A673 (cell line): ENCODE measurements at regions of chr15 and their contacts with region 1.

Region 1: DNA sequence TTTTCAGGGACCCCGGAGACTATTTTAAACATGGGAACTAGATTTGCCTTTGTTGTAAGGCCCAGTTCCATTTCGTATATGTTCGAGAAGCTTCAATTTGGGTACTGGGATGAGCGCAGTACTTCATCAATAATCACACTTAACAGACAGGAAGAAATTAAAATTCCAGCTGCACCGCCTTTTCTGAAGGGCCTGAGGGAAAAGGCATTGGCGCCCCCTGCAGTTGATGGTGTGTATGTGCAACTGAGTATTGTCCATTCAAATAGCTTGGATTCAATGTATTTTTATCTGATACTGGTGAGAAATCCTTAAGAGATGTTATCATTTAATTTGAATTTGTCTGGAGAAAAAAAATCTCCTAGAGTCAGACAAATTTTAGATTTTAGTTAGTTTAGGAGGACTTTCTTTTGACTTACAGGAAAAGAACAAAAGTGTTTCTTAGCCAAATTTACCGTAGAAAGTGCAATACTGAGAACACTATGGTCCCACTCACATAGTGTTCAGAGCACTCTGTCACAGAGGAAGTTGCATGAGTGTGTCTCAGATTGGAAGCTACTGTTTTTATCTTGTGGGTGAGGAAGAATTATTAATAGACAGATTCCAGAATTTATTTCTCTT is 5.4 kb upstream of the ALDH1A2 start:
- DNase-seq: peak; percentile 82
- H3K4me3 ChIP-seq: no peak overlapping the region
- H3K27ac ChIP-seq: no peak overlapping the region
- H3K4me1 ChIP-seq: peaks cover 3% of the 10 kb centered on the region
- H3K27me3 ChIP-seq: peaks cover 33% of the 10 kb centered on the region
- CTCF ChIP-seq: peak; percentile 97

Region 2: DNA sequence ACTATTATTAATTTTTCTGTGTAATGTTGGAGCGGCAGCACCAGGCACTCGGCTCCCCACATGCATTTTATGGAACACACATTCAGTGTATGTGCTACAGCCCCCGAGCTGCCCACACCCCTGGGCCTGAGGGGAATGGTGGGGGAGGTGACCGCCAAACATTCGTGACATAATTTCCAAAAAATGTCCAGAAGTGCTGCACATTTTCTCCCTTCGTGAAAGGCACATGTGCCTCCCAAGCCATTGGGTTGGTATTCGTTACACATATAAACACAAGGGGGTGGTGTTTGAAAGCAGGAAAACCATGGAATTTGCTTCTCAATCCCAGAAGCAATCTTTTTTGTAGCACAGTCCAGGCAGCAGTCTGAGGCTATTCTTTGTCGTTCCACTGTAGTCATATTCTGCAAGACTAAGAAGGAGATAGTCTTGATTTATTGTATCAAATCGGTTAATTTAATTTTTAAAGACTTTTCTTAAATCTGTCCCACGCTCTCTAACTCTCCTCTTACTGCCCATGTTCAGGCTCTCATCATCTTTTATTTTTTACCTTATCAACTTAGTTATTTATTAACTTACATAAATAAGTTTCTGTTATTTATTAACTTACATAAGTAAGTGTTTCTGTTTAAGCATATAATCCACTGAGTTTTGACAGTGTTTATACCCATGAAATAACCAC is 403.6 kb before region 1 on chr15:
- CTCF ChIA-PET with region 1: interaction called, 3 read pairs
- POLR2A ChIA-PET with region 1: no interaction called
- intact Hi-C with region 1: loop called (anchors 10 kb)
- DNase-seq: peak; percentile 53
- H3K4me3 ChIP-seq: no peak overlapping the region
- H3K27ac ChIP-seq: no peak overlapping the region
- H3K4me1 ChIP-seq: no peaks in the 10 kb centered on the region
- H3K27me3 ChIP-seq: peaks cover 8% of the 10 kb centered on the region
- CTCF ChIP-seq: peak; percentile 57

Region 3: DNA sequence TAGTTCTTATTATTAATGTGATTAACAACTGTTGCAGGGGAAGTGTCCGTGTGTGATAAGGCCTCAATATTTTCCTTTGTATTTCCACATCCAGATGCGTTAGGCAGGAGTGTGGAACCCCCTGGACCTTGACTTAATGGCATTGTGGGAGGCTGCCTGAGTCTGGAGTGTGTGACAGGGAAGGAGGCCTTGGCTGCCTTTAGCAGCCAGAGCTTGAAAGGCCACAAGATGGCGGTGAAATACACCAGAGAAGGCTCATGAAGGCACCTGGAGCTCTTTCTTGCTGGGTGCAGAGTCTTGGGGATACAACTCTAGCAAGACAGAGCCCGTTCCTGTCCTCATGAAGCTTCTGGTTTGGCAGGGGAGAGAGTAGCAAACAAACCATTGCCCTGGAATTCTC is 327.5 kb before region 1 on chr15:
- CTCF ChIA-PET with region 1: interaction called, 11 read pairs
- POLR2A ChIA-PET with region 1: no interaction called
- intact Hi-C with region 1: loop called (anchors 10 kb)
- DNase-seq: peak; percentile 26
- H3K4me3 ChIP-seq: no peak overlapping the region
- H3K27ac ChIP-seq: no peak overlapping the region
- H3K4me1 ChIP-seq: no peaks in the 10 kb centered on the region
- H3K27me3 ChIP-seq: no peaks in the 10 kb centered on the region
- CTCF ChIP-seq: peak; percentile 44

Region 4: GRCh38 chr15:57866149-57866736 is 204.7 kb before region 1 on chr15:
- CTCF ChIA-PET with region 1: interaction called, 23 read pairs
- POLR2A ChIA-PET with region 1: no interaction called
- intact Hi-C with region 1: loop called (anchors 1 kb)
- DNase-seq: peak; percentile 79
- H3K4me3 ChIP-seq: no peak overlapping the region
- H3K27ac ChIP-seq: no peak overlapping the region
- H3K4me1 ChIP-seq: no peaks in the 10 kb centered on the region
- H3K27me3 ChIP-seq: no peaks in the 10 kb centered on the region
- CTCF ChIP-seq: peak; percentile 88

Region 5: DNA sequence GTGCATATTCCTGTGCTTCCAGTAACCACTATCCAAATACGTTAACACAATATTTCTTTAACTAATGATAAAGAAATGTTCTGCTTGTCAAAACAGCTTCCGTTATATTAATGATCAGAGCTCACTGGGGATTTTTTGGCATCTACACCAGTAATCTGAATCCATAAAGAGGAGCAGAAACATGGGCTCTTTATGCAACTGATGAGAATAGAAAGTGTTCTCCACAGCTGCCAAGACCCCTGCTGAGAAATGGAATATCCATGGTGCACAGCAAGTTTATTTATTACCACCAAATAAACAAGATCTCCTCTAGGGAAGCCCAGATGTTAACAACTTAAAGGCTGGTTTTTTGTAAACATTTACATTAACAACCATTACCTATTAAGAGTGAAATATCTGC is 59.9 kb before region 1 on chr15:
- CTCF ChIA-PET with region 1: no interaction called
- POLR2A ChIA-PET with region 1: no interaction called
- intact Hi-C with region 1: no loop called
- DNase-seq: peak; percentile 84
- H3K4me3 ChIP-seq: no peak overlapping the region
- H3K27ac ChIP-seq: no peak overlapping the region
- H3K4me1 ChIP-seq: peaks cover 13% of the 10 kb centered on the region
- H3K27me3 ChIP-seq: peaks cover 13% of the 10 kb centered on the region
- CTCF ChIP-seq: no peak

Region 6: GRCh38 chr15:58307313-58307961 is 236.5 kb after region 1 on chr15:
- CTCF ChIA-PET with region 1: no interaction called
- POLR2A ChIA-PET with region 1: no interaction called
- intact Hi-C with region 1: no loop called
- DNase-seq: no peak
- H3K4me3 ChIP-seq: no peak overlapping the region
- H3K27ac ChIP-seq: peak overlapping the region; percentile 72
- H3K4me1 ChIP-seq: peaks cover 37% of the 10 kb centered on the region
- H3K27me3 ChIP-seq: no peaks in the 10 kb centered on the region
- CTCF ChIP-seq: no peak